RWPE1 (cell line): ENCODE measurements at regions of chr20 and their contacts with region 1.

Region 1: DNA sequence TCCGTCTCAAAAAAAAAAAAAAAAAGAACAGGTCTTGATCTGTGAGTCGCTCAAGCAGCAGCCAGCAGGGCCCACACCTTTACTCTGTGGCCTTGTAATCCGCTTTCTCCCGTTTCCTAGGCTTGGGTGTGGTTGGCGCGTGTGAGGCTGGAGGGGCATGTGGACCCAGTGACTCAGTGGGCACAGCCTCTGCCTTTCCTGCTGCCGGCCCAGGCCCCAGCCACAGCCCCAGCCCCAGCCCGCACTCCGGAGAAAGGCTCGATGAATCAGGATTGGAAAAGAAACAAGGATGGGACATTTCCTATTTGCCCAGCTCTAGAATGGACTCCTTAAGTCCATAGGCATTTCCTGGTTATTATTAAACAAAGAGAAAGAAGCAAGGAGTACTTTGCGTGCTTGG is 4.3 kb downstream of the BHLHE23 start:
- DNase-seq: no peak
- H3K27ac ChIP-seq: no peak overlapping the region
- CTCF ChIP-seq: no peak

Region 2: DNA sequence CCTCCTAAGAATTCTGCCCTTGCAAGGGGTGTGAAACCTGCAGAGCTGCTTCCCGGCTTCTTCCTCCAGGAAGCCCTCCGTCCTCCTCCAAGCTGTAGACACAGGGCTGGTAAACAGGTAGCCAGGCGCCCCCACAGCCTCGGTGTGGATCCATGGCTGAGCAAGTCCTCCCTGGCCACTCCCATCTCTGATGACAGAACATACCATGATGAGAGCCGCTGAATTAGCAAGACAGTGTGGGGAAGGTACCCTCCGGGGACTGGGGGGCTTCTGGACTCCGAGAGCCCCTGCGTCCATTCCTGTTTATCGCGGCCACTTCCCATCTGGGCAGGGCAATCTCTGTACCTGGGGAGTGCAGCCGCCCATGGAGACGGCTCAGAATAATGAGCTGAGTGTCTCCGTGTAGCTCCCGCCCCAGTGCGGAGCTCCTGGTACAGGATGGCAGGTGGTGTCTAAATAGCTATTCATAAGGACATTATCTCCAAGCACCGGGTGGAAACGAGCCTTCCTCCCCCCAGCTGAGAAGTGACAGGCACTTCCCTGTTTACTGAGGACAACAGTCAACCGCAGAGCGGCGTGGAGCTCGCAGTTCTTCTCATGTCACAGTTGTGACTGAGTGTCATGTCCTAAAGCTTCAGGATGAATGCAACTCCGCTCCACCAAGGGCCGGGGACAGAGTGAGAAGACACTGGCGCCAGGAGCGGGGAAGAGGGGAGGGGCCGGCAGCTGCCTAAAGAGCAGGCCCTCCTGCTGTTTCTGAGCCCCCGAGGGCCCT is 316.5 kb before region 1 on chr20:
- CTCF ChIA-PET with region 1: no interaction called
- POLR2A ChIA-PET with region 1: no interaction called
- DNase-seq: no peak
- H3K27ac ChIP-seq: peak overlapping the region; percentile 4; the same call in 1 of the 2 replicates
- CTCF ChIP-seq: no peak

Region 3: DNA sequence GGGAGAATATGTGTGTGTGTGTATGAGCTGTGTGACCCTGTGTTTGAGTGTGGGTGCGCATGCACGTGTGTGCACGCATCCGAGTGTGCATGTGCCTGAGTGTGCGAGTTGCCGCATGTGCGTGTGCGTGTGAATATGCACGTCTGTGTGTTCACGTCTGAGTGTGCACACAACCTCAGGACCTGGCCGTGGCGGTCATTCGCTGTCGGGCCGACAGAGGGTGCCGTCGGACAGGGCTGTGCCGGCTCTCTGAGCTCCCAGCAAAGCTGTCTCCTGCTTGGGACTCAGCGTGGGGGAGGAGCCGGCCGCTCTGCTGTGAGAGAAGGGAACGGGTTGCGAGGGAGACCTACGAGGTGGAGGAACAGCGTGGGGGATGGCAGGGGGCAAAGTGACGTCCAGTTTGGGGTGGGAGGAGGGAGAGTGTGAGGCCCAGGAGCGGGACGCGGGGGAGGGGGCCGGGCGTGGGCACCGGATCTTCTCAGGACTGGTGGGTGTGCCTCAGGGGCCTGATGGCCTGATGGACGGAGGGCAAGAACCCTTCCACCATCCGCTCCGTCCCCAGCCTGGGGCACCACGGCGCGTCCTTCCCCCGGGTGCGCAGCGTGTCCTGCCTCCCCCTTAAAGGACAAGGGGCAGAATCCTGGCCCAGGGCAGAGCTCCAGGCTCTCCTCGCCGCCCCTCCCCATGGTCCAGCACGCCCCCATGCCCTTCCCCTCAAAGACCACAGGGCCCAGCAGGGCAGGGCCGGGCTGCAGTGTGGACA is 30.1 kb before region 1 on chr20:
- CTCF ChIA-PET with region 1: interaction called, 21 read pairs
- POLR2A ChIA-PET with region 1: no interaction called
- DNase-seq: peak; percentile 98
- H3K27ac ChIP-seq: no peak overlapping the region
- CTCF ChIP-seq: peak; percentile 98